HEK293T (cell line): ENCODE measurements at regions of chr15 and their contacts with region 1.

Region 1: DNA sequence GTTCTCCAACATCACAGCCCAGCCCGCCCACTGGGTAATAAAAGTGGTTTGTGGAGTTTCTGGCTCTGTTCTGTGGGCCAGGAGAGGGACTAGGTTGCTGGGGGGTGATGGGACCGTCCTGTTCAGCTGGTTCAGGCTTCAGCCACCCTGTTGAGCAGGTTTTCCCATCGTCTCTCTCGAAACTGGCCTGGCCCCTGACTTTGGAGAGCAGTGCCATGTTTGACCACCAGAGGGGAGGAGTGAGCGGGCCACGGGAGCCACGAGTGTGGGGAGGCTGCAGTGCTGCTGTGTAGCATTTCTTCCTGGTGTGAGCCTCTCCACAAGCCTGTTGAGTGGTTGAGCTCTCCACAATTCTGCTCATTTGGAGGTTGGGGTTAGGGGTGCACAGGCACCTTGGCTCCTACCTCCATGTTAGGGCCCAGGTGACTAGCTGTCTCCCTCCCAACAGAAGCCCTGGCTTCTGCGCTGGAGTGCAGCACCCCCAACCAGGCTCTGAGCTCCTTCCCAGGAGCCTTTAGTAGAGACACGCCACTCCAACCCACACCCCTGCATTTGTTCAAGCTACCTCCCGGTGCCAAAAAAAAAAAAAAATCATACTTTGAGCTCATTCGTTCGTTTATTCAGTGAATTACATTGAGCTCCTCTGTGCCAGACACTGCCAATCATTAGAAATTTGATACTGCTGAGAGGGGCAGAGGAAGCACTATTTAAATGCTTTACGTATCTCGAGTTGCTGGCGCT is 13.9 kb downstream of the SPINT1 start:
- DNase-seq: peak; percentile 82

Region 2: DNA sequence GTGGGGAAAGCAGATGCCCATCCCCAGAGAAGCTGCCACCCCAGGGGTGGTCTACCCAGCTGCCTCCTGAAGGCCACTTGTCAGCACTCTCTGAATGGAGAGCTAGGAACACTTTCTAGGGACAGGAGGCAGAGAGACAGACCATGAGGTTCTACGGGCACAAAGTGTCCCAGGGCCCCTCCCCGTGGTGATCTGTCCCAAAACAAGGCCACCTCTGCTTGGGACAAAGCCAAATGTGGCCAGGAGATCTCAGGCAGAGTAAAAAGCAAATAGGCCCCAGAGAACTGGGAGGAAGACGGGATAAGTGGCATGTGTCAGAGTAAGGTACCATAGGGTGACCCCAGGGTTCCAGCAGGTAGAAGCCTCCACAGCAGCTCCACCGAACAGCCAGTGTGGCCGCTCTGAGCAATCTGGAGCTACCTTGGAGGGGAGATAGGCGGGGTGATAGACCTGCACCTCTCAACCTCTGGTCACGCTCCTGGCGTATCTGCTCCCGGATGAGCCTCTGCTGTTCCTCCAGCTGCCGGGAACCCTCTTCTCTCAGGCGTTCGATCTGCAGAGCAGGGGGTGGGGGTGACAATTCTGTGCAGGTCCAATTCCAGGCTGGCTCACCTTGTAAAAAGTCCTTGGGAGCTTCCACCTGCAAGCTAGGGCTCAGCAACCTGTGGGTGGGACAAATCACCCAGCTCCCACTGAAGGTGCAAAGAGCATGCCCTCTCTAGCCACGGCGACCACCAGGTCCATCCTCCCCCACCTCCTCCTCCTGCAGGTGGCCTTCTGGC is 81.8 kb before region 1 on chr15:
- CTCF ChIA-PET with region 1: no interaction called
- POLR2A ChIA-PET with region 1: no interaction called
- DNase-seq: no peak

Region 3: GRCh38 chr15:40847205-40847961 is 10.4 kb before region 1 on chr15:
- CTCF ChIA-PET with region 1: interaction called, 12 read pairs
- POLR2A ChIA-PET with region 1: interaction called, 7 read pairs
- DNase-seq: peak; percentile 62

Region 4: GRCh38 chr15:40873625-40874561 is 16.1 kb after region 1 on chr15 and contains the start of gene RHOV:
- CTCF ChIA-PET with region 1: interaction called, 47 read pairs
- POLR2A ChIA-PET with region 1: interaction called, 17 read pairs
- DNase-seq: peak; percentile 67